PC-3 (cell line): ENCODE measurements at regions of chr12 and their contacts with region 1.

Region 1: DNA sequence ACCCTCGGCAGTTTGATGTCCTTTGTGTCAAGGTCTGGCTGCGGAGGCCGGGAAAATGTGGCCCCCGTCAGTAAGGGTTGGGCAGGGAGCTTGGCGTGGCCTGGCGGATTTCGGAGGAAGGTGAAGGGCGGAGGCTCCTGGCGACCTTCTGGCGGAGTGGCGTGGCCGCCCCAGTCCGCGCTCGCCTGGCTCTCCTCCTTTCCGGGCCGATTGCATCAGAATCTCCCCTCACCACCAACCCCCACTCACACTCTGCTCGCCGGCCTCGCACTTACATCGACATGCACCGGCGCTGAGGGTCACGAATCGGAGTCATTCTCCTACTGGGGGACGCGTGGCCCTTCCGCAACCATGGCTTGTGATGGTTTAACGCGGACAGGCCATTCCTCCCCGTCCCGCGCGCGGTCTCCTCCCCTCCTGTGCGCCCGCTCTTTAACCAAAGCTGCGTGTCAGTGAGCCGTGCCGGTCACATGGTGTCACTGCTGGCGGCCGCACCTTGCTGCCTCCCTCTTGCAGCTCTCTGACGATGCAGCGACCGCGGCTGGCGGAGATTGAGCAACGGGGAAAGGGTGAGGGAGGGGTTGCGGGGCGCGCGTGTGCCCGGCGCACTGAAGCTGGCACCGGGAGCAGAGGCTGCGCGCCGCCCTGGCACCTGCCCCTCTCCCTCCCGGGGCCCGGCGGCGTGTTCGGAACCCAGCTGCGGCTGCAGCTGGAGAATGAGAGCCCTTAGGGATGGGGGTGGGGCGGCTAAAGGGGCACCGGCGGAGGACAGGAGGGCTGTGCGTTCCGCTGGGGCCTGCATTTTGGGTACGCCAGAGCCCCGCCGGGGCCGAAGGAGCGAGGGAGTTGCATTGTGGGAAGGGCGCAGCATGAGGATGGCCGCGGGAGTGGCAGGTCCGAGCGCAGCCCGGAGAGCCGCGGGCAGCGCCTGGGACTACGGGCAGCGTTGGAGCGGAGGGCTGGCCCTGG is at the start of gene SLC38A1:
- DNase-seq: peak; percentile 91
- ATAC-seq: peak; percentile 68
- H3K4me3 ChIP-seq: peak within 1 kb of the TSS; percentile 85
- H3K27ac ChIP-seq: peak within 1 kb of the TSS; percentile 81
- H3K4me1 ChIP-seq: peaks cover 39% of the 10 kb centered on the region
- H3K27me3 ChIP-seq: no peaks in the 10 kb centered on the region
- CTCF ChIP-seq: no peak
- total RNA-seq, gene SLC38A1: 101 and 107 TPM in 2 replicates

Region 2: GRCh38 chr12:46209914-46210872 is 58.7 kb before region 1 on chr12:
- CTCF ChIA-PET with region 1: no interaction called
- POLR2A ChIA-PET with region 1: no interaction called
- intact Hi-C with region 1: loop called (anchors 5 kb)
- DNase-seq: peak; percentile 91
- ATAC-seq: peak; percentile 75
- H3K4me3 ChIP-seq: peak overlapping the region; percentile 26; the same call in 1 of the 2 replicates
- H3K27ac ChIP-seq: peak overlapping the region; percentile 90
- H3K4me1 ChIP-seq: peaks cover 35% of the 10 kb centered on the region
- H3K27me3 ChIP-seq: no peaks in the 10 kb centered on the region
- CTCF ChIP-seq: no peak

Region 3: DNA sequence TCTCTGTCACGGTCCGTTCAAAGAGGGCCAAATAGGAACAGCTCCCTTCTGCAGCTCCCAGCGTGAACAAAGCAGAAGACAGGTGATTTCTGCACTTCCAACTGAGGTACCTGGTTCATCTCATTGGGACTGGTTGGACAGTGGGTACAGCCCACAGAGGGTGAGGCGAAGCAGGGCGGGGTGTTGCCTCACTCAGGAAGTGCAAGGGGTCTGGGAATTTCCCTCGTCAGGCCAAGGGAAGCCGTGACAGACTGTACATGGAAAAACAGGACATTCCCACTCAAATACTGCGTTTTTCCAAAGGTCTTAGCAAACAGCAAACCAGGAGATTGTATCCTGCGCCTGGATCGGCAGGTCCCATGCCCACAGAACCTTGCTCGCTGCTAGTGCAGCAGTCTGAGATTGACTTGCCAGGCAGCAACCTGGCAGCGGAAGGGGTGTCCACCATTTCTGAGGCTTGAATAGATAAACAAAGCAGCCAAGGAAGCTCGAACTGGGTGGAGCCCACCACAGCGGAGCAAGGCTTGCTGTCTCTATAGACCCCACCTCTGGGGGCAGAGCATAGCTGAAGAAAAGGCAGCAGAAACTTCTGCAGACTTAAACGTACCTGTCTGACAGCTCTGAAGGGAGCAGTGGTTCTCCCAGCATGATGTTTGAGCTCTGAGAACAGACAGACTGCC is 22.7 kb before region 1 on chr12:
- CTCF ChIA-PET with region 1: interaction called, 10 read pairs
- POLR2A ChIA-PET with region 1: no interaction called
- intact Hi-C with region 1: no loop called
- DNase-seq: no peak
- ATAC-seq: no peak
- H3K4me3 ChIP-seq: no peak overlapping the region
- H3K27ac ChIP-seq: no peak overlapping the region
- H3K4me1 ChIP-seq: no peaks in the 10 kb centered on the region
- H3K27me3 ChIP-seq: no peaks in the 10 kb centered on the region
- CTCF ChIP-seq: no peak

Region 4: DNA sequence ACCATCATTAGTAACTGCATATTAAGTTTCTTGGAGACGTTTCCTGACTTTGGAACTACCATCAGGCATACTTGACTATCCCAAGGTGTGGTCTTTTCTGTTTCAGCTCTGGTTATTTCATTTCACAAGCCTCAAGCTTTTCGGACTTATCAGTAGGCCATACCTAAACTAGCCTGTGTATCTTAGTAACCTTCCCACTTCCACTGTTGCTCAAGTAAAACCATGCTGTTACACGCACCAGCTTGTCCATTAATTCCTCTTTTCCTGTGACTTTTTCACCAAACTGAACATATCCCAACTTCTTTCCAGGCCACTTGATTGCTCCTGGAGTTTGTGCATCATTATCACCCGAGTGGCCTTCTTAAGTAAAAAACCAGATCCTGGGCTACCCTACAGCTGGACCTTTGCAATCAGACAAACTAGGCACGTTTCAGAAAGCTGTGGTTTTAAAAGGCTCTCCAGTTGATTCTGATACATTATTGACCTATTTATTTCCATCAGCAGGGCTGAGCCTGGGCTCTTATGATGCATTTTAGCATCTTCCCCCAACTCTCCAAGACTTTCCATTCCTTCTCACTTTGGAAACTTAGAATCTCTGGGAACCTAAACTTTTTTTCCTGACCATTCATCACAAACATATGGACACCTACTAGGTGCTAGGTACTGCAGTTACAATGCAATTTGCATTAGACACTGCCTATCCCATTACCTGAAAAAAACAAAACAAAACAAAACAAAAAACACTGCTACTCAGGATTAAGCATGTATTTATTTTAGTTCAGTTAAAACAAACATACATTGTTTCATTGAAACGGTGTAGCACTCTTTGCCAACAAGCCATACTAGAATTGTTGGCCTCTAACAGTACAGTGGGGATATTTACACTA is 88.8 kb after region 1 on chr12:
- CTCF ChIA-PET with region 1: interaction called, 3 read pairs
- POLR2A ChIA-PET with region 1: interaction called, 3 read pairs
- intact Hi-C with region 1: loop called (anchors 2 kb)
- DNase-seq: peak; percentile 39
- ATAC-seq: peak; percentile 46
- H3K4me3 ChIP-seq: no peak overlapping the region
- H3K27ac ChIP-seq: no peak overlapping the region
- H3K4me1 ChIP-seq: no peaks in the 10 kb centered on the region
- H3K27me3 ChIP-seq: no peaks in the 10 kb centered on the region
- CTCF ChIP-seq: no peak

Region 5: DNA sequence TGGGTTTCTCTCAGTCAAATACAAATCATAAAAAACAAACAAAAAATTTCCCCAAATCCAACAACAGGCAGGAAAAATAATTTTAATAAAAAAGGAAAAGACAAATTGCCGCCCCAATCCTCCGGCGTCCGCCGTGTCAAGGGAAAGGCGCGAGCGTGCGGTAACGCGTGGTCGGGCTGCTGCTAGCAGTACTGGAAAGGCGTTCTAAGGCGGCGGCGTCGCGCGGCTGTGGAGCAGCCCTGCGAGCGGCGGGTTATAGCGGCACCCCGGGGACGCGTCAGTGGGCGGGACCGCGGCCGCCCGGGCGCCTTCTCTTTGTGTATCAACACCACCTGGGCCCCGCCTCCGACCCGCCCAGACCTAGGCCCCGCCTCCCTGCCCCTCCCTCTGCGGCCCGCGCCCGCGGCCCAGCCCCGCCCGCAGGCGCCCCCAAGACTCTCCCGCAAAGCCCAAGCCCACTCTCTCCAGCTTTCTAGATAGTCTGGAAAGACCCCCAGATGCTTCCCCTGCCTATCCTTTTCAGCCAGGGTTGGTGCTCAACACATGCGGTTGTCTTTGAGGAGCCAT is 103.8 kb after region 1 on chr12 and contains the start of gene SLC38A2:
- CTCF ChIA-PET with region 1: no interaction called
- POLR2A ChIA-PET with region 1: no interaction called
- intact Hi-C with region 1: loop called (anchors 5 kb)
- DNase-seq: peak; percentile 93
- ATAC-seq: peak; percentile 85
- H3K4me3 ChIP-seq: peak within 1 kb of the TSS; percentile 83
- H3K27ac ChIP-seq: peak within 1 kb of the TSS; percentile 80
- H3K4me1 ChIP-seq: peaks cover 40% of the 10 kb centered on the region
- H3K27me3 ChIP-seq: no peaks in the 10 kb centered on the region
- CTCF ChIP-seq: no peak
- total RNA-seq, gene SLC38A2: 214 and 232 TPM in 2 replicates

Region 6: GRCh38 chr12:46556105-46556559 is 287.3 kb after region 1 on chr12:
- CTCF ChIA-PET with region 1: no interaction called
- POLR2A ChIA-PET with region 1: no interaction called
- intact Hi-C with region 1: loop called (anchors 5 kb)
- DNase-seq: peak; percentile 93
- ATAC-seq: peak; percentile 76
- H3K4me3 ChIP-seq: peak overlapping the region; percentile 41
- H3K27ac ChIP-seq: peak overlapping the region; percentile 96
- H3K4me1 ChIP-seq: peaks cover 87% of the 10 kb centered on the region
- H3K27me3 ChIP-seq: no peaks in the 10 kb centered on the region
- CTCF ChIP-seq: no peak

Region 7: DNA sequence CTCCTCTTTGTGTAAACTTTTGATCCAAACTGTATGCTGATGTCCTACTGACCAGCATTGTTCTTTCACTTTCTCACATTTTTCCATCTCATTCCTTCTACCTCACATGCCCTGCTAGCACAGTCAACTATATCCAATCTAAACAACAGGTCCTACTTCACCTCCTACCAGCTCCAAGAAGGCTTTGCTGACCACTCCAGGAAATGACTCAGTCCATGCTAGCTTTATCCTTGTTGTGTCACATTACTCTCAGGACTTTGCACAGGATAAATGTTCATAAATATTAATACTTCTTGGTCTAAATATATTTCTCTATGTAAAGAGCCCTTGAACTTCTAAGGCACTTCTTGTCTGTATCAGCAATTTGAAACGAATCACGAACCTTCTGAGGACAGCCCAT is 745.6 kb after region 1 on chr12:
- CTCF ChIA-PET with region 1: no interaction called
- POLR2A ChIA-PET with region 1: no interaction called
- intact Hi-C with region 1: loop called (anchors 10 kb)
- DNase-seq: peak; percentile 79
- ATAC-seq: peak; percentile 66
- H3K4me3 ChIP-seq: no peak overlapping the region
- H3K27ac ChIP-seq: peak overlapping the region; percentile 53
- H3K4me1 ChIP-seq: peaks cover 34% of the 10 kb centered on the region
- H3K27me3 ChIP-seq: no peaks in the 10 kb centered on the region
- CTCF ChIP-seq: no peak